ENCODE measurements at regions of chr4 and their contacts with region 1.

Region 1: DNA sequence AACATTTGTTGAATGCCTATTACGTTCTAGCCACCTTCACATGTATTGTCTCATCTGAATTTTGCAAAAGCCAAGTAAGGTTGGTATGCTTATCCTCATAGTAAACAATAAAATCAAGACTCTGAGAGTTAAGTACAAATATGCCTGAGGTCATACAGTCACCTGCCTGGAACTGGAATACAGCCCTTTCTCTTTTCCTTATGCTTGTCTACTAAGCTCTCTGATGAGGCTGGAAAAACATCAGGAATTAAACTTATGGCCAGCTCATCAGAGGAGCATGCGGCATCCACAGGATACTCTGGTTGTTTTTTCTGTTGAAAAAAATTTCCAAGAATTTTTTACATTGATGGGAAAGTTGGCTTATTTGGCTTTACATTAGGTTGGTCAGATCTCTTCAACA is 35.5 kb downstream of the NCAPG start:
- DNase-seq: no peak
- H3K4me3 ChIP-seq: no peak overlapping the region
- H3K27ac ChIP-seq: no peak overlapping the region
- H3K4me1 ChIP-seq: no peaks in the 10 kb centered on the region
- H3K27me3 ChIP-seq: no peaks in the 10 kb centered on the region
- CTCF ChIP-seq: no peak
- EP300 ChIP-seq: no peak
- POLR2A ChIP-seq: no peak

Region 2: GRCh38 chr4:18366892-18367291 is 520.6 kb after region 1 on chr4:
- in situ Hi-C with region 1: loop called in 1 of 4 experiments (anchors 25 kb)
- intact Hi-C with region 1: no loop called
- DNase-seq: no peak
- H3K4me3 ChIP-seq: no peak overlapping the region
- H3K27ac ChIP-seq: no peak overlapping the region
- H3K4me1 ChIP-seq: no peaks in the 10 kb centered on the region
- H3K27me3 ChIP-seq: no peaks in the 10 kb centered on the region
- CTCF ChIP-seq: peak; percentile 29 to 75 (median 52)
- EP300 ChIP-seq: no peak
- POLR2A ChIP-seq: no peak

Region 3: DNA sequence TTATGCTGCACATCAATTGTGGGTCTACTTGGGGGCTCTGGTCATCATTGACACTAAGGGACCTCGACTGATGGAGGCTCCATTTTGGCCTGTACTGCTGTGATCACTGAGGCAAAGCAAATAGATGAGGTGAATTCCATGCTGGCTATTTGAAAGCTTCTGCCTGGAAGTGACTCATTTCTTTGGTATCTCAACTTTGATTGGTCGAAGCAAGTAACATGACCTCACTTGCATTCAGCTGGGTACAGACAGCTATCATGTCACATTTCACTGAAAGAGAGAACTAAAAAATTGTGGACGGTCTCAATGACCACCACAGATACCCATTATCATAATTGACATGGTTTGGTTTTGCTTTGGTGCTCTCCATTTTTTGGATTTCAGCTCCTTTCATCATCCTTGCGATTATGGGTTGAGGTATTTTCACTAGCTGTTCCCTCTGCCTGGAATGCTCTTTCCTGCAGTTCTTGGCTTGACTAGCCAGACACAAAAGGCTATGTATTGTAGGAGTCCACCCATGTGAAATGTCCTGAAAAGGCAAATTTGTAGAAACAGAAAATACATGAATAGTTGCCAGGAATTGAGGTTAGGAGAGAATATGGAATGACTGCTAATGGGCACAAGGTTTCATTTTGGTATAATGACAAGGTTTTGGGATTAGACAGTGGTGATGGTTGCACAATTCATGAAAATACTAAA is 544.5 kb after region 1 on chr4:
- in situ Hi-C with region 1: no loop called
- intact Hi-C with region 1: no loop called
- DNase-seq: no peak
- H3K4me3 ChIP-seq: no peak overlapping the region
- H3K27ac ChIP-seq: no peak overlapping the region
- H3K4me1 ChIP-seq: no peaks in the 10 kb centered on the region
- H3K27me3 ChIP-seq: no peaks in the 10 kb centered on the region
- CTCF ChIP-seq: no peak
- EP300 ChIP-seq: no peak
- POLR2A ChIP-seq: no peak

Measured in transverse colon (tissue), 4 donors.